ENCODE measurements at regions of chr22 and their contacts with region 1.

Region 1: GRCh38 chr22:29689880-29690213 is 30.0 kb upstream of the CABP7 start:
- DNase-seq: peak; percentile 51 to 83 (median 74)
- ATAC-seq: peak; percentile 76 to 93 (median 88)
- H3K4me3 ChIP-seq: no peak overlapping the region
- H3K27ac ChIP-seq: no peak overlapping the region
- H3K4me1 ChIP-seq: no peaks in the 10 kb centered on the region
- H3K27me3 ChIP-seq: no peaks in the 10 kb centered on the region
- CTCF ChIP-seq: peak; percentile 33 to 63 (median 56)

Region 2: GRCh38 chr22:29503811-29504372 is 186.0 kb before region 1 on chr22:
- intact Hi-C with region 1: no loop called
- DNase-seq: no peak
- ATAC-seq: peak in 2 of 4 donors; percentile 41 to 46
- H3K4me3 ChIP-seq: no peak overlapping the region
- H3K27ac ChIP-seq: no peak overlapping the region
- H3K4me1 ChIP-seq: no peaks in the 10 kb centered on the region
- H3K27me3 ChIP-seq: no peaks in the 10 kb centered on the region
- CTCF ChIP-seq: no peak

Region 3: DNA sequence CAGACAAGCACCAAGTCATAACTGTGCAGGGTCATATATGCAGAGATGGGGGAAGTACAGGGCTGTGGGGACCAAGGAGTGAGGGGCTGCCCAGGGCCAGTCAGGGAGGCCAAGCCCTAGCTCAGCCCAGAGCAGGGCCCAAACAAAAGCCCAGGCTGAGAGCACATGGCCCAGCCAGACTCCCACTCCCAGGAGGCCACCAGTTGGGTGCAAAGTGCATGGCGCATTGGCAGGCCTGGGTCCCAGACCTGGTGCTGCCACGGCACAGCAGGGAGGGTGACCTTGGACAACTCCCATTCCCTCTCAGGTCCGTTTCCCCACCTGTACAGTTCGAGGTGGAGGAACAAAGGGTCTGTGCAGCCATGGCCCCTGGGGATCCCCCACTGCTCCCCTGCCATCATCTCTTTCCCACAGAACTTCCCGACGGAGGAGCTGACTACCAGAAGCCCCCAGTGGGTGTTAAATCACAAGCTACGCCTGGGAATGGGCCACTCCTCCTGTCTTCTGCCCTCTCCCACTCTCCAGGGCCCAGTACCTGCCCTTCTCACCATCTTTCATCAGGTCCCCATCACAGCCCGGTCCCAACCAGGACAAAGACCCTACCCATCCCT is 109.5 kb before region 1 on chr22:
- intact Hi-C with region 1: no loop called
- DNase-seq: peak; percentile 22 to 75 (median 39)
- ATAC-seq: peak; percentile 14 to 37 (median 34)
- H3K4me3 ChIP-seq: peak overlapping the region; percentile 52 to 80 (median 62)
- H3K27ac ChIP-seq: peak overlapping the region in 3 of 4 donors; percentile 42 to 58 (median 53)
- H3K4me1 ChIP-seq: no peaks in the 10 kb centered on the region
- H3K27me3 ChIP-seq: no peaks in the 10 kb centered on the region
- CTCF ChIP-seq: no peak

Region 4: GRCh38 chr22:30005213-30005857 is 315.5 kb after region 1 on chr22:
- intact Hi-C with region 1: loop called in 1 of 3 experiments (anchors 10 kb)
- DNase-seq: peak in 4 of 6 donors; percentile 41 to 85 (median 70)
- ATAC-seq: peak; percentile 74 to 94 (median 92)
- H3K4me3 ChIP-seq: no peak overlapping the region
- H3K27ac ChIP-seq: no peak overlapping the region
- H3K4me1 ChIP-seq: peaks cover 0 to 5% (median 0%) of the 10 kb centered on the region in 3 donors
- H3K27me3 ChIP-seq: no peaks in the 10 kb centered on the region
- CTCF ChIP-seq: peak; percentile 87 to 90 (median 88)